ENCODE measurements at regions of chr1 and their contacts with region 1.

Region 1: GRCh38 chr1:113835642-113836307 is 23.5 kb upstream of the RSBN1 start:
- DNase-seq: no peak
- H3K4me3 Mint-ChIP-seq: no peak overlapping the region
- H3K27ac Mint-ChIP-seq: no peak overlapping the region
- H3K4me1 Mint-ChIP-seq: peaks cover 5% of the 10 kb centered on the region
- H3K27me3 Mint-ChIP-seq: no peaks in the 10 kb centered on the region

Region 2: DNA sequence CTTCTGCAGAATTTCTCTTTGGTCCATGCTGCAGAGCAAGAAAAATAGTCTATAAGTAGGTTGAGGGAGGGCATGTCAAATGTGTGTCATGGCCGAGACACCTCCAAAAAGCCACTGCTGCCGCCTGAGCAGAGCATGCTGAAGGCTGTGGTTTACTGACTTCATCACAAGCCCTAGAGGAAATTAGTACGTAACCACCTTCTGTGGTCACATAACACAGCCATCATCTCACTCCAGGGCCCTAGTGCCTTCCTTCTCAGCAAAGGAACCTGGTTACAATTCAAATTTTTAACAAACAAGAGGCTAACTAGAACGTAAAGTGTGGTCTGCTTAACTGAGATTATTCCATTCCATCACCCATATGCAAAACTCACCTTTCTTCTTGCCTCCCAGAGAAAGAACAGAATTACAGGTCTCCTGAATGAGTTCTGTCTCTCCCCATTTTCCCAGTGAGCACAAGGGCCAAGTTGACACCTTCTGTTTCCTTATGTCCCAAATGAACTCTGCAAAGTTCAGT is 35.9 kb after region 1 on chr1 and contains the start of gene PTPN22:
- CTCF ChIA-PET with region 1: interaction called, 14 read pairs
- POLR2A ChIA-PET with region 1: no interaction called
- intact Hi-C with region 1: loop called (anchors 2 kb)
- DNase-seq: peak; percentile 89
- H3K4me3 Mint-ChIP-seq: peak within 1 kb of the TSS; percentile 80
- H3K27ac Mint-ChIP-seq: peak within 1 kb of the TSS; percentile 97
- H3K4me1 Mint-ChIP-seq: peaks cover 75% of the 10 kb centered on the region
- H3K27me3 Mint-ChIP-seq: no peaks in the 10 kb centered on the region
- total RNA-seq, gene PTPN22: 45.2 to 45.7 TPM

Region 3: DNA sequence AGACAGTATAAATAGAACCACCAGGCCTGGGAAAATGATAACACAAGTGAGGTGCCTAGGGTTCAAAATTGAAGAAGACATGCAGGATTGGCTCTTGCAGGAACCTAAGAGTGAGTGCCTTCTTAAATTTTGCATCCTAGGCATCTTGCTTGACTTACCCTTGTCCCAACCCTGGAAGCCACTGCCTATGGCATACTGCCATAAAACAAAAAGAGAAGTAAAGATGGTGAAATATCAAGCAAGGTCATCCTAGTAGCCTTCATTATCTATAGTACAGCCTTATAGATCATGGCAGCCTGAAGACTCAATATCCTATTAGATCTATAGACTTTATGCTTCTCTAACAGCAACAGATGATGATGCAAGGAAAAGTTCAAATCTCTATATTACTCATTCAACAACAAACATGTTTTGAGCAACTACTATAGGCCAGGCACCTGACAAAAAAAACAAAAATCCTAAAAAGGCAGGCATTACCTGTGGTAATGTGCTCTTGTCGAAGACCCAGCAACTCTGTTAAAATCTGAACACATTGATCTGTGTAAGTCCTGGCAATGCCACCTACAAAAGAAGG is 62.6 kb after region 1 on chr1:
- CTCF ChIA-PET with region 1: interaction called, 56 read pairs
- POLR2A ChIA-PET with region 1: interaction called, 7 read pairs
- intact Hi-C with region 1: no loop called
- DNase-seq: no peak
- H3K4me3 Mint-ChIP-seq: no peak overlapping the region
- H3K27ac Mint-ChIP-seq: peak overlapping the region; percentile 74
- H3K4me1 Mint-ChIP-seq: peaks cover 41% of the 10 kb centered on the region
- H3K27me3 Mint-ChIP-seq: no peaks in the 10 kb centered on the region

Region 4: GRCh38 chr1:113904674-113905434 is 69.1 kb after region 1 on chr1 and contains the starts of genes AP4B1 and DCLRE1B:
- CTCF ChIA-PET with region 1: interaction called, 56 read pairs
- POLR2A ChIA-PET with region 1: interaction called, 7 read pairs
- intact Hi-C with region 1: loop called (anchors 1 kb)
- DNase-seq: peak; percentile 99
- H3K4me3 Mint-ChIP-seq: peak within 1 kb of the TSS; percentile 94
- H3K27ac Mint-ChIP-seq: peak within 1 kb of the TSS; percentile 96
- H3K4me1 Mint-ChIP-seq: peaks cover 39% of the 10 kb centered on the region
- H3K27me3 Mint-ChIP-seq: no peaks in the 10 kb centered on the region
- total RNA-seq, gene AP4B1: 41.4 to 42.2 TPM
- total RNA-seq, gene DCLRE1B: 19.4 to 19.6 TPM

Region 5: GRCh38 chr1:113949007-113949406 is 113.2 kb after region 1 on chr1:
- CTCF ChIA-PET with region 1: interaction called, 14 read pairs
- POLR2A ChIA-PET with region 1: no interaction called
- intact Hi-C with region 1: no loop called
- DNase-seq: no peak
- H3K4me3 Mint-ChIP-seq: no peak overlapping the region
- H3K27ac Mint-ChIP-seq: peak overlapping the region; percentile 8
- H3K4me1 Mint-ChIP-seq: peaks cover 62% of the 10 kb centered on the region
- H3K27me3 Mint-ChIP-seq: no peaks in the 10 kb centered on the region